Prostate gland (tissue), 2 donors: ENCODE measurements at regions of chr16 and their contacts with region 1.

Region 1: GRCh38 chr16:64450177-64450576 is 671.7 kb downstream of the CDH11 start:
- DNase-seq: no peak
- H3K4me3 ChIP-seq: no peak overlapping the region
- H3K27ac ChIP-seq: no peak overlapping the region
- H3K4me1 ChIP-seq: no peaks in the 10 kb centered on the region
- H3K27me3 ChIP-seq: no peaks in the 10 kb centered on the region
- CTCF ChIP-seq: no peak
- POLR2A ChIP-seq: no peak

Region 2: DNA sequence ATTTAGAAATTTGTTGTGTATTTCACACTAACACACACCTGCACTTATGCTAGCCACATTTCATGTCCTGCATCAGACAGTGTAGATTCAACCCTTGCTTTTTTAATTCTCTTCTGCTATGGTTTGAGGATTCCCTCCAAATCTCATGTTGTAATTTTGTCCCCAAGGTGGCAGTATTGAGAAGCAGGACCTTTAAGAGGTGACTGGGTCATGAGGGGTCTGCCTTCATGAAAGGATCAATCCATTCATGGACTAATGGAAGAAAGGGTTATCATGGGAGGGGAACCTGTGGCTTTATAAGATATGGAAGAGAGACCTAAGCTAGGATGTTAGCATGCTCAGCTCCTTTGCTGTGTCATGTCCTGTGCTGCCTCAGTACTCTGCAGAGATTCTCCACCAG is 360.5 kb before region 1 on chr16:
- intact Hi-C with region 1: loop called (anchors 5 kb)
- DNase-seq: no peak
- H3K4me3 ChIP-seq: no peak overlapping the region
- H3K27ac ChIP-seq: no peak overlapping the region
- H3K4me1 ChIP-seq: no peaks in the 10 kb centered on the region
- H3K27me3 ChIP-seq: no peaks in the 10 kb centered on the region
- CTCF ChIP-seq: peak in 2 of 4 experiments; percentile 11 to 27
- POLR2A ChIP-seq: no peak

Region 3: DNA sequence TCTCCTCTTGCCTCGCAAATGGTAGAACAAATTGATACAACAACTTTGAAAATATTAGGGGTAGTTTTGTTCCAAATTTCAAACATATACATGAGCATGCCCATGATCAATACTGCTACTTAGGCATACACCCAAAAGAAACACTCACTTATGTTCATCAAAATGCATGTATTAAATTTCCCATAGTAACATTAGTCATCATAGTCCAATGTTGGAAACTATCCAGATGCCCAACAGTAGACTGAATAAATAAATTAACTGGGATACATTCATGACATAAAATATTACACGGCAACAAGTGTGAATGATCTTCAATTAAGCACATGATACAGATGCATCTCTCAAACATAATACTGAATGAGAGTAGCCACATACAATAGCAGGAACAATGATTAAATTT is 280.1 kb after region 1 on chr16:
- intact Hi-C with region 1: no loop called
- DNase-seq: no peak
- H3K4me3 ChIP-seq: no peak overlapping the region
- H3K27ac ChIP-seq: no peak overlapping the region
- H3K4me1 ChIP-seq: no peaks in the 10 kb centered on the region
- H3K27me3 ChIP-seq: no peaks in the 10 kb centered on the region
- CTCF ChIP-seq: no peak
- POLR2A ChIP-seq: no peak

Region 4: DNA sequence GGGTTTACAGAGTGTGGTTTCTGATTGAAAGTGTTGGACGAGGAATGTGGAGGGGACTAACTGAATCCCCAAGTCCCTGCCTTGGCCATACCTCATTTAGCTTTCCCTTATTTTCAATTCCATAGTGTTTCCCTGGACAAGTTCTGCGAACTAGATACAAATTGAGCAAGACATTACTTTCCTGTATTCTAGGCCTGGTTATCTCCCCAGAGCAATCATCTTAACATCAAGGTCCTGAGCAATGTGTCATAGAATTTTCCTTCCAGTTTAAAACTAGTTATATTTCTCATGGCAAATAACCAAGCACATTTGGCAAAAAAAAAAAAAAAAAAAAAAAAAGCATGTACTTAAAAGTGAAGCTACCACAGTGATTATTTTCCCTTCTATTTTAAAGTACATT is 341.6 kb after region 1 on chr16:
- intact Hi-C with region 1: no loop called
- DNase-seq: no peak
- H3K4me3 ChIP-seq: no peak overlapping the region
- H3K27ac ChIP-seq: no peak overlapping the region
- H3K4me1 ChIP-seq: no peaks in the 10 kb centered on the region
- H3K27me3 ChIP-seq: no peaks in the 10 kb centered on the region
- CTCF ChIP-seq: no peak
- POLR2A ChIP-seq: no peak